ENCODE measurements at regions of chr3 and their contacts with region 1.

Region 1: GRCh38 chr3:101849051-101849720 is at the start of gene NFKBIZ:
- DNase-seq: peak; percentile 84 to 95 (median 89)
- ATAC-seq: peak; percentile 70 to 75
- H3K4me3 Mint-ChIP-seq: peak within 1 kb of the TSS; percentile 88 to 100 (median 97)
- H3K27ac Mint-ChIP-seq: peak within 1 kb of the TSS; percentile 98 to 100 (median 99)
- H3K4me1 Mint-ChIP-seq: peaks cover 28 to 40% (median 38%) of the 10 kb centered on the region in 4 donors
- H3K27me3 Mint-ChIP-seq: no peaks in the 10 kb centered on the region
- polyA plus RNA-seq, gene NFKBIZ: 9.3 to 23.6 (median 20.2) TPM

Region 2: DNA sequence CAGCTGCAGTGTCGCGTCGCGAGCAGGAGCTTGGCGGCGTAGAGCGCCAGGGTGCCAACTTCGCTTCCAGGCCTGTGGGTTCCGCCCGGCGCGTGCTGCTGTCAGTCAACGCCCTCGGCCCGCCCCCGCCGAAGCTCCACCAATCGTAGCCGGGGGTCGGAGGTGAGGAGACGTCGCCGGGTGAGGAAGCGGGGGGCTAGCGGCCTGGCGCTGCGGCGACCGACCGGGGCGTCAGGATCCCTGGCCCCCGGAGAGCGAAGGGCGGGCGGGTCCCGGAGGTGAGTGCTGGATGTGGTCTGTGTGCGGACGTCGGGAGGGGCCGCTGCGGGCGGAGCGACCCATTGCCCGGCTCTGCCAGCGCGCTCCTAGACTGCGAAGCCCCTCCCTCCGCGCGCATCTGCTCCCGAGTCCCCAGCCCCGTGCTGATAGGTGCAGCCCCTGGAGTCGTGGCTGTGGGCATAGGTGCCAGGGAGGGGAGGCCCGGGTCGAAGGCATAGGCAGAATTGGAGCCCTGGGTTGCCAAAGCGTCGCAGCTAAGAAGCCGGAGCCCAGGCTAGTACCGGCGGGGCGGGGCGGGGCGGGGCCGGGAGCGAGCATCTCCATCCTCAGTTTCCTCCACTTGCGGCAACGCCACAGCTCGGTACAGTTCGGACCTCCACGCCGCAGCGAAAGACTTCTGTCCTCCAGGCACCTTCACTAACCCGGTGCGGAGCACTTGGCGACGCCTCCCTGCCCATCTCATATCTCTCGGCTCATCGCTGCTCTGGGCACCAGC is 70.0 kb before region 1 on chr3 and contains the start of gene NXPE3:
- POLR2A ChIA-PET with region 1: interaction called, 15 read pairs
- DNase-seq: peak; percentile 92 to 97 (median 94)
- ATAC-seq: peak; percentile 88 to 90
- H3K4me3 Mint-ChIP-seq: peak within 1 kb of the TSS; percentile 90 to 98 (median 94)
- H3K27ac Mint-ChIP-seq: peak within 1 kb of the TSS; percentile 96 to 100 (median 99)
- H3K4me1 Mint-ChIP-seq: peaks cover 12 to 60% (median 56%) of the 10 kb centered on the region in 4 donors
- H3K27me3 Mint-ChIP-seq: no peaks in the 10 kb centered on the region
- polyA plus RNA-seq, gene NXPE3: 32.5 to 61.0 (median 50.2) TPM

Region 3: GRCh38 chr3:101827211-101828174 is 21.7 kb before region 1 on chr3:
- POLR2A ChIA-PET with region 1: interaction called, 98 read pairs
- DNase-seq: peak; percentile 51 to 87 (median 74)
- ATAC-seq: peak; percentile 89
- H3K4me3 Mint-ChIP-seq: peak overlapping the region; percentile 87 to 98 (median 96)
- H3K27ac Mint-ChIP-seq: peak overlapping the region; percentile 88 to 99 (median 98)
- H3K4me1 Mint-ChIP-seq: peaks cover 13 to 59% (median 56%) of the 10 kb centered on the region in 4 donors
- H3K27me3 Mint-ChIP-seq: no peaks in the 10 kb centered on the region

Region 4: GRCh38 chr3:101861212-101861788 is 12.1 kb after region 1 on chr3:
- POLR2A ChIA-PET with region 1: interaction called, 10 read pairs
- DNase-seq: no peak
- ATAC-seq: peak; percentile 4 to 21
- H3K4me3 Mint-ChIP-seq: no peak overlapping the region
- H3K27ac Mint-ChIP-seq: peak overlapping the region in 7 of 10 donors; percentile 11 to 71 (median 41)
- H3K4me1 Mint-ChIP-seq: peaks cover 15 to 44% (median 28%) of the 10 kb centered on the region in 4 donors
- H3K27me3 Mint-ChIP-seq: no peaks in the 10 kb centered on the region

Region 5: DNA sequence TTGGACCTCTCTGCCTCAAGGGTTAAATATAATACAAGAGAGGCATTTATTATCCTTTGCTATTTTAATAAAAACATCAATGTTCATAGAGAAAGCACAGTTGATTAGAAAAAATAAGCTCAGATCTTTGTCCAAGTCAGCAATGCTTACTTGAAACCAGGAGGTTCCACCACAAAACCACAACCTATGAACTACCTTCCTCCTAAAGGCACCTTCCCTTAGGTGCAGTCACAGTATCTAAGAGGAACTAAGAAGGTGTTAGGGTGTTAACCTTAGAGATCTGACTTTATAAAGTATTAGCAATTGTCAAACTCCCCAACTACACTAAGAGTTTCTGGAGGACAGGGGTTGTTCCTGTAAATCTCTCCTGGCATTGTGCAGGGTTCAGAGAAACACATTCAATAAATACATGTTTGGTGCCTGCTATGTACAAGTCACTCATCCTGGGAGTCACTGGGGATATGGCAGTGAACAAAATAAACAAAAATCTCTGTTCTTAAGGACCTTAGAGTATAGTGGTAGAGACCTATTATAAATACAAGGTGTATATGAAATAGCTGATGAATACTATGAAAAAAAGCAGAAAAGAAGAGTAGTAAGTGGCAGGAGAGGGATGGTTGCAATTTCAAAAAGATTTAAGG is 208.7 kb after region 1 on chr3:
- POLR2A ChIA-PET with region 1: interaction called, 10 read pairs
- DNase-seq: peak in 5 of 10 donors; percentile 22 to 77 (median 51)
- ATAC-seq: peak; percentile 99 to 100
- H3K4me3 Mint-ChIP-seq: peak overlapping the region in 9 of 10 donors; percentile 5 to 61 (median 33)
- H3K27ac Mint-ChIP-seq: peak overlapping the region; percentile 36 to 84 (median 68)
- H3K4me1 Mint-ChIP-seq: peaks cover 26 to 41% (median 32%) of the 10 kb centered on the region in 4 donors
- H3K27me3 Mint-ChIP-seq: no peaks in the 10 kb centered on the region

Region 6: DNA sequence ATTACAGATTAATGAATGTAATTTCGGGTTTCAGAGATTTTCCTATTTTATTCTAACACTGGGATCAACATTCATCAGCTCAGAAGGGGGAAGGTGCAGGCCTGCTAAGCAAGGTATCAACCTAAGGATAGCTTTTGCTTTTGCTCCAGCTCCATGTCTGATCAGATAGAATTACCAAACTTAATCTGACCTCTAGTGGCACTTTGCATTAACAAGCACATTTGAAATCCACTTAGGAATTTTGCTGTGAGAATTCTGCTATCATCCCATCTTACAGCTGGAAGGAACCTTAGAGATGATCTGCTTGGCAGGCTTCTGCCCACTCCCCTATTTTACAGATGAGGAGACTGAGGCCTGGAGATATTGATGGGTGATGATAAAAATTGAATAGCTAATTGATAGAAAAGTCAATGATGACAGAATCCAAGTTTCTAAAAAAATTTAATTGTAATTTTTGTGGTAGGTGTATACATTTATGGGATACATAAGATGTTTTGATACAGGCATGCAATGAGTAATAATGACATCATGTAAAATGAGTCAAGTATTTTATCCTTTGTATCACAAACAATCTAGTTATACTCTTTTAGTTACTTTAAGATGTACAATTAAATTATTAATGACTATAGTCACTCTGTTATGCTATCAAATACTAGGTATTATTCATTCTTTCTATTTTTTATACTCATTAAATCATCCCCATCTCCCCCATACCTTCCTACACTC is 376.4 kb after region 1 on chr3:
- POLR2A ChIA-PET with region 1: interaction called, 15 read pairs
- DNase-seq: peak in 4 of 10 donors; percentile 1 to 53 (median 46)
- ATAC-seq: peak; percentile 44 to 69
- H3K4me3 Mint-ChIP-seq: no peak overlapping the region
- H3K27ac Mint-ChIP-seq: peak overlapping the region in 2 of 10 donors; percentile 8 to 24
- H3K4me1 Mint-ChIP-seq: peaks cover 18 to 47% (median 34%) of the 10 kb centered on the region in 4 donors
- H3K27me3 Mint-ChIP-seq: peaks cover 0 to 3% (median 0%) of the 10 kb centered on the region in 5 donors